Caco-2 (cell line): ENCODE measurements at regions of chr15 and their contacts with region 1.

Region 1: GRCh38 chr15:81000624-81001151 is at the start of gene TLNRD1:
- DNase-seq: peak; percentile 86 to 89
- H3K4me3 ChIP-seq: peak within 1 kb of the TSS; percentile 78
- H3K4me3 Mint-ChIP-seq: peak within 1 kb of the TSS; percentile 90
- H3K27ac Mint-ChIP-seq: peak within 1 kb of the TSS; percentile 82
- H3K4me1 ChIP-seq: no peaks in the 10 kb centered on the region; the same call in 1 of the 2 replicates
- H3K4me1 Mint-ChIP-seq: no peaks in the 10 kb centered on the region
- H3K27me3 ChIP-seq: no peaks in the 10 kb centered on the region
- H3K27me3 Mint-ChIP-seq: no peaks in the 10 kb centered on the region
- CTCF ChIP-seq: no peak
- total RNA-seq, gene TLNRD1: 13.7 and 13.8 TPM in 2 replicates

Region 2: GRCh38 chr15:80873366-80873952 is 127.2 kb before region 1 on chr15:
- CTCF ChIA-PET with region 1: no interaction called
- POLR2A ChIA-PET with region 1: interaction called, 10 read pairs
- intact Hi-C with region 1: no loop called
- DNase-seq: no peak
- H3K4me3 ChIP-seq: no peak overlapping the region
- H3K4me3 Mint-ChIP-seq: no peak overlapping the region
- H3K27ac Mint-ChIP-seq: no peak overlapping the region
- H3K4me1 ChIP-seq: no peaks in the 10 kb centered on the region
- H3K4me1 Mint-ChIP-seq: no peaks in the 10 kb centered on the region
- H3K27me3 ChIP-seq: no peaks in the 10 kb centered on the region
- H3K27me3 Mint-ChIP-seq: peaks cover 9% of the 10 kb centered on the region
- CTCF ChIP-seq: no peak

Region 3: DNA sequence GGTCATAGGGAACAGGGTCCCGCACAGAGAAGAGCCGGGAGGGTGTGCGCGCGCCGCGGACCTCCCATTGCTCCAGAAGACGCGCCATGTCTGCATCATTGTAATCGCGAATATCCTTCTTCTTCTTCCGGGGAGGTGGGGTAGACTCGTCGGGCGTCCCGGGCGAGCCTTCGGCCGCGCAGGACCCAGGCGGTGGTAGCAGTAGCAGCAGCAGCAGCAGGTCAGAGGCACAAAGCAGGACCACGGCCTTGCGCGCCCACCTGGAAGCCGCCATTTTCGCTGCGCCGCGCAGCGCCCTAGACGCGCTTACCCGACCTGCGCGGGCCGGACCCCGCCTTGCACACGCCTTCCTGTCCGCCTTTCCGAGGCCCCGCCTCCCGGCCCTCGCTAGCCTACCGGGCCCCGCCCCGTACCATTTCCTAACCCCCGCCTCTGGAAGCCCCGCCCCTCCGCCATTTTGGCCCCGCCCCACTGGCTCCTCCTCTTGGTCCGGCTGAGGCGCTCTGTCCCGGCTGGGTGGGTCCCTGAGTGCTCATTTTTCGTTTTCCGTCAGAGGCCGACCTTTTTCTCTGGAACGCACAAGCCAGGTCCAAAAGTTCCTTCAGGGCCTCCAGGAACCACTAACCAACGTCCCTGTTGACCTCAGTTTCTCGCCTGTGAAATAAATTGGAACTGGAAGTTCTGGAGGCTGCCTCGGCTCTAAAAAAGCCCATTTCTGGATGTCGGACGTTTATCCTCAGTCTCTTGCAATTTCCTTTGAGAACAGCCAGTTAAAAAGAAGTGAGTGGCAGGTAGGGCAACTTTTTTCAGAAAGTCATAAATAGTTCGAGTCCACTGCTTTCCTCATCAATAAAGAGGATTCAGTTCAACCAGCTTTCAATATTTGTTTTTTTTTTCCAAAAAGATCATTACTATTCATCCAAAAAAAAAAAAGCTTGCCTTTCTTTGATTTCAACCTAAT is 10.9 kb before region 1 on chr15 and contains the start of gene MESD:
- CTCF ChIA-PET with region 1: no interaction called
- POLR2A ChIA-PET with region 1: no interaction called
- intact Hi-C with region 1: loop called (anchors 1 kb)
- DNase-seq: peak; percentile 94 to 95
- H3K4me3 ChIP-seq: peak within 1 kb of the TSS; percentile 94
- H3K4me3 Mint-ChIP-seq: peak within 1 kb of the TSS; percentile 94
- H3K27ac Mint-ChIP-seq: peak within 1 kb of the TSS; percentile 94
- H3K4me1 ChIP-seq: peaks cover 16% of the 10 kb centered on the region
- H3K4me1 Mint-ChIP-seq: peaks cover 17% of the 10 kb centered on the region
- H3K27me3 ChIP-seq: no peaks in the 10 kb centered on the region
- H3K27me3 Mint-ChIP-seq: no peaks in the 10 kb centered on the region
- CTCF ChIP-seq: no peak
- total RNA-seq, gene MESD: 29.2 and 30.3 TPM in 2 replicates

Region 4: GRCh38 chr15:81038975-81039607 is 38.4 kb after region 1 on chr15:
- CTCF ChIA-PET with region 1: no interaction called
- POLR2A ChIA-PET with region 1: interaction called, 11 read pairs
- intact Hi-C with region 1: no loop called
- DNase-seq: no peak
- H3K4me3 ChIP-seq: no peak overlapping the region
- H3K4me3 Mint-ChIP-seq: no peak overlapping the region
- H3K27ac Mint-ChIP-seq: no peak overlapping the region
- H3K4me1 ChIP-seq: no peaks in the 10 kb centered on the region
- H3K4me1 Mint-ChIP-seq: peaks cover 6% of the 10 kb centered on the region
- H3K27me3 ChIP-seq: no peaks in the 10 kb centered on the region
- H3K27me3 Mint-ChIP-seq: no peaks in the 10 kb centered on the region
- CTCF ChIP-seq: no peak

Region 5: GRCh38 chr15:81106560-81106959 is 105.9 kb after region 1 on chr15:
- CTCF ChIA-PET with region 1: no interaction called
- POLR2A ChIA-PET with region 1: no interaction called
- intact Hi-C with region 1: loop called (anchors 1 kb)
- DNase-seq: peak; percentile 41 to 46
- H3K4me3 ChIP-seq: no peak overlapping the region
- H3K4me3 Mint-ChIP-seq: no peak overlapping the region
- H3K27ac Mint-ChIP-seq: no peak overlapping the region
- H3K4me1 ChIP-seq: no peaks in the 10 kb centered on the region
- H3K4me1 Mint-ChIP-seq: no peaks in the 10 kb centered on the region
- H3K27me3 ChIP-seq: no peaks in the 10 kb centered on the region; the same call in 1 of the 2 replicates
- H3K27me3 Mint-ChIP-seq: peaks cover 16% of the 10 kb centered on the region
- CTCF ChIP-seq: peak; percentile 58 to 67

Region 6: GRCh38 chr15:81256916-81257315 is 256.2 kb after region 1 on chr15:
- CTCF ChIA-PET with region 1: no interaction called
- POLR2A ChIA-PET with region 1: no interaction called
- intact Hi-C with region 1: loop called (anchors 5 kb)
- DNase-seq: no peak
- H3K4me3 ChIP-seq: no peak overlapping the region
- H3K4me3 Mint-ChIP-seq: no peak overlapping the region
- H3K27ac Mint-ChIP-seq: no peak overlapping the region
- H3K4me1 ChIP-seq: no peaks in the 10 kb centered on the region
- H3K4me1 Mint-ChIP-seq: no peaks in the 10 kb centered on the region
- H3K27me3 ChIP-seq: no peaks in the 10 kb centered on the region
- H3K27me3 Mint-ChIP-seq: peaks cover 13% of the 10 kb centered on the region
- CTCF ChIP-seq: no peak